ENCODE measurements at regions of chr3 and their contacts with region 1.

Region 1: GRCh38 chr3:193665370-193665989 is 72.5 kb downstream of the OPA1 start:
- DNase-seq: peak; percentile 4
- H3K4me3 ChIP-seq: no peak overlapping the region
- H3K27ac ChIP-seq: no peak overlapping the region
- H3K27me3 ChIP-seq: no peaks in the 10 kb centered on the region
- CTCF ChIP-seq: peak; percentile 50

Region 2: GRCh38 chr3:193640728-193641439 is 24.6 kb before region 1 on chr3:
- CTCF ChIA-PET with region 1: interaction called, 11 read pairs
- POLR2A ChIA-PET with region 1: no interaction called
- DNase-seq: no peak
- H3K4me3 ChIP-seq: no peak overlapping the region
- H3K27ac ChIP-seq: no peak overlapping the region
- H3K27me3 ChIP-seq: no peaks in the 10 kb centered on the region
- CTCF ChIP-seq: no peak

Region 3: DNA sequence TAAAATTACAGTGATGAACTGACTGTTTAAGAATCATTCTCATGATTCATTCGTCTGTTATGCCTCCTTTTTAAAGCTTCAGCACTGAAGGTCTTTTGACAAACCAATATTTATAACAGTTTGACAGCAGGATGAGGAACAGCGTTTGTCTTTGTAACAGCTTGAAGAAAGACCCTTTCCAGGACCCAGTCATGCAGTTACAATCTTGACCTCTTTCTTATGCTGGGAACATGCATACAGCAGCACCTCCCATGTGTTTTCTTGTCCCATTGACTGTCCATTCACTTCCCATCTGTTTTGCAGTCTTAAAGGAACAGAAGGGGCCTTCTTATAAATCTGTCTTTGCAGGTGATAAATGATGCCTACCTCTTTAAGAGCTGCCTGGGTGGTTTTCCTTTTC is 14.7 kb after region 1 on chr3:
- CTCF ChIA-PET with region 1: interaction called, 12 read pairs
- POLR2A ChIA-PET with region 1: no interaction called
- DNase-seq: peak; percentile 20
- H3K4me3 ChIP-seq: no peak overlapping the region
- H3K27ac ChIP-seq: no peak overlapping the region
- H3K27me3 ChIP-seq: no peaks in the 10 kb centered on the region
- CTCF ChIP-seq: no peak

Region 4: GRCh38 chr3:193805509-193805908 is 140.0 kb after region 1 on chr3:
- CTCF ChIA-PET with region 1: no interaction called
- POLR2A ChIA-PET with region 1: no interaction called
- DNase-seq: peak; percentile 51
- H3K4me3 ChIP-seq: no peak overlapping the region
- H3K27ac ChIP-seq: no peak overlapping the region
- H3K27me3 ChIP-seq: peaks cover 30% of the 10 kb centered on the region
- CTCF ChIP-seq: no peak

Region 5: DNA sequence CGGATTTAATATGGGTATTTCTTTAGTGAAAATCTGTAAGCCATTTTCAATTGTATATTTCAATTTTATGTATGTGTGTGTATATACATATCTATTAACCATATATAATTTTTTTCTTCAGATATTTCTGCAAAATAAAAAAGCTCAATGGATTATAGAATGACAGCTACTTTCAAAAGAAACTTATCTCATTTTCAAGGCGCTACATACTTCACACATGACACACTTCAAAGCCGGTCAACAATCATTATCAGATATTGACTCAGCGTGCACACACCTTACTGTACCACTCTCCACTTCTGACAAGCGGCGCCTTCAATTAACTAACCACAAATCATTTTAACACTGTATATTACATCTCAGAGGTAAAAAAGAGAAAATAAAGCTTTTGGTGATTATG is 781.7 kb after region 1 on chr3:
- CTCF ChIA-PET with region 1: interaction called, 10 read pairs
- POLR2A ChIA-PET with region 1: no interaction called
- DNase-seq: no peak
- H3K4me3 ChIP-seq: no peak overlapping the region
- H3K27ac ChIP-seq: no peak overlapping the region
- H3K27me3 ChIP-seq: no peaks in the 10 kb centered on the region
- CTCF ChIP-seq: no peak

Measured in AG04450 (cell line).